Dorsolateral prefrontal cortex (tissue), 120 donors: ENCODE measurements at regions of chr6 and their contacts with region 1.

Region 1: GRCh38 chr6:36302227-36302976 is 32.5 kb downstream of the PNPLA1 start:
- DNase-seq: peak; percentile 51 to 95 (median 76)
- H3K4me3 ChIP-seq: peak overlapping the region in 1 of 59 donors; percentile 8
- H3K27ac ChIP-seq: no peak overlapping the region
- H3K27me3 ChIP-seq: no peaks in the 10 kb centered on the region
- CTCF ChIP-seq: peak; percentile 78 to 98 (median 94)

Region 2: GRCh38 chr6:35569011-35569461 is 733.4 kb before region 1 on chr6:
- intact Hi-C with region 1: no loop called
- DNase-seq: peak in 4 of 10 donors; percentile 20 to 48 (median 33)
- H3K4me3 ChIP-seq: no peak overlapping the region
- H3K27ac ChIP-seq: no peak overlapping the region
- H3K27me3 ChIP-seq: peaks cover 0 to 4% (median 0%) of the 10 kb centered on the region in 45 donors
- CTCF ChIP-seq: peak in 45 of 56 donors; percentile 18 to 62 (median 36)

Region 3: GRCh38 chr6:36333931-36334725 is 31.7 kb after region 1 on chr6:
- intact Hi-C with region 1: no loop called
- DNase-seq: peak in 4 of 10 donors; percentile 55 to 76 (median 62)
- H3K4me3 ChIP-seq: peak overlapping the region in 2 of 59 donors; percentile 22 to 28
- H3K27ac ChIP-seq: peak overlapping the region in 58 of 59 donors; percentile 40 to 95 (median 85)
- H3K27me3 ChIP-seq: peaks cover 0 to 6% (median 0%) of the 10 kb centered on the region in 45 donors
- CTCF ChIP-seq: no peak

Region 4: GRCh38 chr6:36360241-36361054 is 58.0 kb after region 1 on chr6:
- intact Hi-C with region 1: loop called (anchors 1 to 5 kb)
- DNase-seq: peak; percentile 67 to 91 (median 83)
- H3K4me3 ChIP-seq: peak overlapping the region in 10 of 59 donors; percentile 0 to 33 (median 12)
- H3K27ac ChIP-seq: peak overlapping the region; percentile 8 to 98 (median 78)
- H3K27me3 ChIP-seq: no peaks in the 10 kb centered on the region
- CTCF ChIP-seq: peak; percentile 61 to 97 (median 89)

Region 5: DNA sequence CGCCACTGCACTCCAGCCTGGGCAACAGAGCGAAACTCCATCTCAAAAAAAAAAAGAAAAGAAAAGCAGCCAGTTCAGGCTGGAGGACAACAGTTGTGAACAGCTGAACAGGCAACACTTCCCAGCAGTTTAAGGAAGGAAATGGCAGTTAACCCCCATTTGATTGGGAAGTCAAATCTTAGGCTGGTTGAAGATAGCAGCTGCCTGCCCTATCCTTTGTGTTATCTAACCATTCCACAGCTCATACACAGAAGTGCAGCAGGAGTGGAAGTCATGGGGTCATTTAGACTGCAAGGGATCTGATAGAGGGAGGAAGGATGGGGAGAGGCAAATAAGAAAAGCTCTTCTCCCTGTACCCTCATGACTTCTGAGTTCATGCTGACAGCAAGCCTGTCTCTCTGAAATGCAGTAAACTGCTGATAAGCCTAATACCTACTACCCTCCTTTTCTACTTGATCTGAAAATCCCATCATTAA is 175.7 kb after region 1 on chr6:
- intact Hi-C with region 1: no loop called
- DNase-seq: no peak
- H3K4me3 ChIP-seq: no peak overlapping the region
- H3K27ac ChIP-seq: peak overlapping the region in 1 of 59 donors; percentile 6
- H3K27me3 ChIP-seq: no peaks in the 10 kb centered on the region
- CTCF ChIP-seq: no peak

Region 6: GRCh38 chr6:36578431-36578830 is 276.0 kb after region 1 on chr6:
- intact Hi-C with region 1: no loop called
- DNase-seq: no peak
- H3K4me3 ChIP-seq: no peak overlapping the region
- H3K27ac ChIP-seq: peak overlapping the region in 1 of 59 donors; percentile 64
- H3K27me3 ChIP-seq: no peaks in the 10 kb centered on the region
- CTCF ChIP-seq: no peak